SK-N-SH (cell line): ENCODE measurements at regions of chr16 and their contacts with region 1.

Region 1: DNA sequence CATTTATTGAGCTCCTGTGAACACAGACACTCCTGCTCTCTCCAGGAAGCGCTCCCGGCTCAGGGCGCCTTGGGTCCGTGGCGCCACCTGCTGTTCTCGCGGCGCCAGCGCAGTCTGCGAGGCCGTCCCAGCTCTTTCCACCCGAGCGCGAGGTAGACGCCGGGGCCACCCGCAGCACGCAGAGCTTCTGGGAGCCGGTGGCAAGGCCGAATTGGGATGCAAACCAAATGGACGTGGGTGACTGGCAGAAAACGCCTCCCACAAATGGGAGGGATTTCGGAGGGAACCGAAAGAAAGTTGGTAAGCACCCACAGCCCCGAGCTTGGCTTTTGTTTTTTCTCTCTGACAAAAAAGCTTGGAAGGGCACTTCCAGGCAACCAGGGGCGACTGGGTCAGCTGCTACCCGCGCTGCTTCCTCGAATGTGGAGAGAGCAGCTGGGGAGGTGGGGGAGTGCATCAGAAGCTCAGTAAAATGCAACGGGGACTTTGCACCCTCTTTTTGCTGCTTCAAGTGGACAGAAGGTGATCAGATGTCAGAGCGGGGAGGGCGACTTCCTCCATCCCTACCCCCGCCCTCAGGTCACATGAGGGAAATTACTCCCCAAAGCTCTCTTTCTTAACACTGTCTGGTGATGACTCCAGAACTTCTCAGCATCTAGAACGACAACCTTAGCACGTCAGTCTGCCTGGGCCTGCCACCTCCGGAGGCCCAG is 13.5 kb upstream of the N4BP1 start:
- DNase-seq: peak; percentile 93
- H3K4me3 ChIP-seq: peak overlapping the region; percentile 38 to 57
- H3K27ac ChIP-seq: no peak overlapping the region; a peak in 1 of 4 replicates
- H3K4me1 ChIP-seq: peaks cover 0 to 7% of the 10 kb centered on the region in 2 experiments; a peak in 1 of 4 replicates
- H3K27me3 ChIP-seq: no peaks in the 10 kb centered on the region
- CTCF ChIP-seq: peak; percentile 96
- EP300 ChIP-seq: no peak
- RAD21 ChIP-seq: peak; percentile 88

Region 2: GRCh38 chr16:48347191-48347865 is 276.1 kb before region 1 on chr16:
- CTCF ChIA-PET with region 1: interaction called, 29 read pairs
- POLR2A ChIA-PET with region 1: no interaction called
- DNase-seq: no peak
- H3K4me3 ChIP-seq: no peak overlapping the region
- H3K27ac ChIP-seq: no peak overlapping the region
- H3K4me1 ChIP-seq: no peaks in the 10 kb centered on the region; a peak in 1 of 4 replicates
- H3K27me3 ChIP-seq: no peaks in the 10 kb centered on the region
- CTCF ChIP-seq: no peak
- EP300 ChIP-seq: no peak
- RAD21 ChIP-seq: no peak

Region 3: DNA sequence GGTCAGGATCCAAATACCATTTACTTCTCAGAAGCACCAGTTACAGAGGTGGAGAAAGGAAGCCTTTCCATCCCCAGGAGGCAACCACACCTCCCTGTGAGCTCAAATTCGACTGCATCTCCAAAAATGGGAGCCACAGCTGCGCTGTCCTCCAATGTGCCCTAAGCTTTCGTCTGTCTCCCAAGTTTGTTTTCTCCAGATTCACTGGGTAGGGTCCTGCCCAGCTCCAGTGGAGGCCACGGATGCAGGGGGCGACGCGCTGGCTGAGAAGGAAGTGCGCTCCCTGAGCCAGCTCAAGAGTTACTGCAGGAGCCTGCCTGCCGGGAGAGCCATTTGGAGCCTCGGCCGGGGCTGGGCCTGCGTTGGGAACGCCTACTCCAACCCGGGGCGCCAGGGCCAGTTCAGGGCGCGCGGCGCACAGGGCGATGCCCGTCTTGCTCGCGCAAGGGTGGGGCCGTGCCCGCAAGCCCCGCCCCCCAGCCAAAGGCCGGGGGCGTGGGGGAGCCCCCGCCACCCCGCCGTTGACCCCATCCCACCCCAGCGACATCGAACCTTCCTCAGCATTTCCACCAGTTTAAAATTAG is 257.8 kb before region 1 on chr16:
- CTCF ChIA-PET with region 1: interaction called, 33 read pairs
- POLR2A ChIA-PET with region 1: no interaction called
- DNase-seq: peak; percentile 90
- H3K4me3 ChIP-seq: peak overlapping the region; percentile 63 to 86
- H3K27ac ChIP-seq: peak overlapping the region; percentile 82 to 91
- H3K4me1 ChIP-seq: peaks cover 14 to 27% of the 10 kb centered on the region in 2 experiments; a peak in 3 of 4 replicates
- H3K27me3 ChIP-seq: no peaks in the 10 kb centered on the region
- CTCF ChIP-seq: no peak
- EP300 ChIP-seq: no peak
- RAD21 ChIP-seq: no peak; the same call in 1 of the 2 replicates

Region 4: DNA sequence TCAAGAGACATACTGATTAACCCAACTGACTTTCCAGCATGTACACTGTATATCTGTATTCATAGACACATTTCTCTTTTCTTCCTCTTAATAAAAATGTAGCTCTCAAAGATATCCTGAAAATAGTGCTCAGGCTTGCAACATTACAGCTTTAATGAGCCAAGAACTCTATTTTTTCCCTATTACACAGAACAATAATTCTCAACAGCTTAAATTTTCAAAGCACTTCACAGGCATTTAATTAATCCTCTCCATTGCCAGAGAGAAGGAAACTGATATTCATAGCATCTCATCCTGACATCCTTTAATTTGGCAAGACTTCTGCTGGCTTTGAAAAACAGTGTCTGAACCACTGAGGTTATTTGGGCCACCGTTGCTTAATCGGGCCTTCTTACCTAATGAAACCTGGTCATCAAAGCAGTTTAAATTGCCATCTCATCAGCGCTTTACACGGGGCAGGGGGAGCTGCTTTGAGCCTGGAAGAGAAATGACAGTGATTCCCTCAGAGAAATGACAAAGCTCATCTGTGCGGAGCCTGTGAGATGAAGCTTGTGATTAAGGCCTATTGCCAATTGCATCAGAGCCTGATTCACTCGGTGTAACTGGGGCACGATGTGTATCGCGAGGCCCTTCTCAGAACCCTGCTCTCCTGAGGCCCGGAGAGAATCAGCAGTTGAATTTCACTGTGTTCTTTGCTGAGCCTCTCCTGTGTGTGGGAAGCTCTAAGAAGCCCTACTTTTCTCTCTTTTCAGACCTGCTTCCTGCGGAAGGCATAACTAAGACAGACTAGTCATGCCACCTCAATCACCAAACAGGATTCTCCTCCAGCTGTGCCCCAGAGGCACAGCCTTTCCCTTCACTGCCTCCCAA is 229.7 kb before region 1 on chr16:
- CTCF ChIA-PET with region 1: interaction called, 11 read pairs
- POLR2A ChIA-PET with region 1: no interaction called
- DNase-seq: peak; percentile 67
- H3K4me3 ChIP-seq: no peak overlapping the region
- H3K27ac ChIP-seq: peak overlapping the region; percentile 1 to 13; a peak in 2 of 4 replicates
- H3K4me1 ChIP-seq: peaks cover 0 to 8% of the 10 kb centered on the region in 2 experiments; a peak in 1 of 4 replicates
- H3K27me3 ChIP-seq: no peaks in the 10 kb centered on the region
- CTCF ChIP-seq: no peak
- EP300 ChIP-seq: no peak
- RAD21 ChIP-seq: no peak

Region 5: GRCh38 chr16:48542020-48542473 is 81.4 kb before region 1 on chr16:
- CTCF ChIA-PET with region 1: interaction called, 16 read pairs
- POLR2A ChIA-PET with region 1: interaction called, 3 read pairs
- DNase-seq: peak; percentile 78
- H3K4me3 ChIP-seq: no peak overlapping the region
- H3K27ac ChIP-seq: no peak overlapping the region
- H3K4me1 ChIP-seq: no peaks in the 10 kb centered on the region; a peak in 1 of 4 replicates
- H3K27me3 ChIP-seq: no peaks in the 10 kb centered on the region
- CTCF ChIP-seq: peak; percentile 69
- EP300 ChIP-seq: no peak
- RAD21 ChIP-seq: peak; percentile 88